CD4-positive, alpha-beta memory T cell (primary cell): ENCODE measurements at regions of chr16 and their contacts with region 1.

Region 1: DNA sequence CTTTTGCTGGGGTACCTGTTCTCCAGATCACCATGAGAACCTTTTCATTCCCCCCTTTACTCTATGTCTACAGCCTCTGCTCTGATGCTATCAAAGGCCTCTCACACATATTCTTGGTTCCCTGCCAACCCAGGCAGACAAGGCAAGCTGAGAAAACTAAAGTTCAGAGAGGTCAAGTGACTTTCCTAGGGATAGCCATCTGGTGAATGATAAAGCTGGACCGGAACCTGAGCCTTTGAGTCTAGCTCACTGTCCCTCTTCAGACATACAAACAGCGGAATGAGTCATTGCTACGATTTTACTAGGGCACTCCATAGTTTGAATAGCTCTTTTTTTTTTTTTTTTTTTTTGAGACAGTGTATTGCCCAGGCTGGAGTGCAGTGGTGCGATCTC is 73.3 kb downstream of the XYLT1 start:
- DNase-seq: peak; percentile 37 to 68 (median 45)
- H3K4me3 ChIP-seq: no peak overlapping the region
- H3K4me3 Mint-ChIP-seq: peak overlapping the region; percentile 16 to 89 (median 76)
- H3K27ac ChIP-seq: peak overlapping the region; percentile 77
- H3K27ac Mint-ChIP-seq: peak overlapping the region; percentile 97 to 100 (median 99)
- H3K4me1 ChIP-seq: peaks cover 77% of the 10 kb centered on the region
- H3K4me1 Mint-ChIP-seq: peaks cover 45 to 85% (median 68%) of the 10 kb centered on the region in 4 donors
- H3K27me3 ChIP-seq: no peaks in the 10 kb centered on the region
- H3K27me3 Mint-ChIP-seq: no peaks in the 10 kb centered on the region

Region 2: DNA sequence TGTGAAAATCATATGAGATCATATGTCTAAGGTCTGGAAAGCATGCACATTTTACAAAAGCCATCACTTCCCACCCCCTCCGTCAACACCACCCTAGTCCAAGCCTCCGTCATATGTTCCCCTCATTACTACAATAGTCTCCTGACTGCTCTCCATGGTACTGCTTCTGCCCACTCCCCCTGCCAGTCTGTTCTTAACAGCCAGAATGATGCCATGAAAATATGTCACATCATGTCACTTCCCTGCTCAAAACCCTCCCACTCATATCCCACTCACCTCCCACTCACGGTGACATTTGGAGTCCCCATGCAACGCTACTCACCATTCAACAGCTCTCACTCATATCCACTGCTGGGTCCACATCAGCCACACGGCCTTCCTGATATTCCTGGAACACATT is 359.1 kb before region 1 on chr16:
- CTCF ChIA-PET with region 1: no interaction called
- POLR2A ChIA-PET with region 1: no interaction called
- intact Hi-C with region 1: no loop called
- DNase-seq: no peak
- H3K4me3 ChIP-seq: no peak overlapping the region
- H3K4me3 Mint-ChIP-seq: no peak overlapping the region
- H3K27ac ChIP-seq: no peak overlapping the region
- H3K27ac Mint-ChIP-seq: no peak overlapping the region
- H3K4me1 ChIP-seq: no peaks in the 10 kb centered on the region
- H3K4me1 Mint-ChIP-seq: no peaks in the 10 kb centered on the region
- H3K27me3 ChIP-seq: no peaks in the 10 kb centered on the region
- H3K27me3 Mint-ChIP-seq: no peaks in the 10 kb centered on the region

Region 3: GRCh38 chr16:17334096-17334495 is 63.4 kb before region 1 on chr16:
- CTCF ChIA-PET with region 1: no interaction called
- POLR2A ChIA-PET with region 1: no interaction called
- intact Hi-C with region 1: no loop called
- DNase-seq: no peak
- H3K4me3 ChIP-seq: no peak overlapping the region
- H3K4me3 Mint-ChIP-seq: no peak overlapping the region
- H3K27ac ChIP-seq: no peak overlapping the region
- H3K27ac Mint-ChIP-seq: peak overlapping the region in 4 of 7 donors; percentile 57 to 82 (median 62)
- H3K4me1 ChIP-seq: no peaks in the 10 kb centered on the region
- H3K4me1 Mint-ChIP-seq: peaks cover 8 to 19% (median 11%) of the 10 kb centered on the region in 4 donors
- H3K27me3 ChIP-seq: no peaks in the 10 kb centered on the region
- H3K27me3 Mint-ChIP-seq: no peaks in the 10 kb centered on the region

Region 4: DNA sequence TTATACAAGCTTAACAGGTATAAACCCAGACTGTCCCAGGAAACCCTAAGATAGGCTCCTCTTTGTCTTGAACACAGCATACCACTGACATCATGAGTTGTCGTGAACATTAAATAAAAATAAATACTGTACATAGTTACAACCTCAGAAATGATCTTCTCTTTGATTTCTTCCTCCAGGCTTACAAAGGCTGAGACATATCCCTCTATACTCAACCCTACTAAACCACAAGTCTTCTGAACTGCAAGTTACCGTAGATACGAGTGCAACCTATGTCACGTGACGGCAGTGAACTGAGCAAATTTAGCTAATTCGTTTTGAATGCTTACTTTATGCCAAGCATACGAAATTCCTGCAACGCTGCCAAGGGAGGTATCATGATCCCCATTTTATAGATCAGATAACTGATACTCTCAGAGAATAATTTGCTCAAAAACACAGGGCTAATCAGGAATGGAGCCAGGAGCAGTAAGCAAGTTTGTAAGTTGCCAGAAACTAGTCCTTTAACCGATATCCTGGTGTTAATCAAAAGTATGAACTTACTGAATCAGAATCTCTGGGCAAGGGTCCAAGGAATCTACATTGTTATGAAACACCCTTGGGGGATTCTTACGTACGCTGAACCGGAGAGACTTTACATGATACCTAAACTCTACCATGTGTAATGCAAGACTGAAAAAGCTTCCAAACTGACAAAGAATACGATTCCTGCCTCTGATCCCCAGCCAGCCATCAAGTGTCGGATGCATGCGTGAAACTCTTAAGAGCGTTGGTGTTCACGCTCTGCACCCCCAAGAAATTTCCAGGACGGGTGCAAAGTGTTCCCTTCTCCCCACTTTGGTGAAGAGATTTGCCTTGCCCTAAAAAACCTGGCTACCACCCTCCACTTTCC is 32.9 kb before region 1 on chr16:
- CTCF ChIA-PET with region 1: interaction called, 10 read pairs
- POLR2A ChIA-PET with region 1: interaction called, 201 read pairs
- intact Hi-C with region 1: loop called (anchors 1 kb)
- DNase-seq: peak; percentile 85 to 91 (median 87)
- H3K4me3 ChIP-seq: peak overlapping the region; percentile 10 to 18
- H3K4me3 Mint-ChIP-seq: peak overlapping the region; percentile 52 to 77 (median 68)
- H3K27ac ChIP-seq: peak overlapping the region; percentile 72
- H3K27ac Mint-ChIP-seq: peak overlapping the region; percentile 95 to 100 (median 99)
- H3K4me1 ChIP-seq: peaks cover 100% of the 10 kb centered on the region
- H3K4me1 Mint-ChIP-seq: peaks cover 84 to 100% (median 94%) of the 10 kb centered on the region in 4 donors
- H3K27me3 ChIP-seq: no peaks in the 10 kb centered on the region
- H3K27me3 Mint-ChIP-seq: no peaks in the 10 kb centered on the region

Region 5: DNA sequence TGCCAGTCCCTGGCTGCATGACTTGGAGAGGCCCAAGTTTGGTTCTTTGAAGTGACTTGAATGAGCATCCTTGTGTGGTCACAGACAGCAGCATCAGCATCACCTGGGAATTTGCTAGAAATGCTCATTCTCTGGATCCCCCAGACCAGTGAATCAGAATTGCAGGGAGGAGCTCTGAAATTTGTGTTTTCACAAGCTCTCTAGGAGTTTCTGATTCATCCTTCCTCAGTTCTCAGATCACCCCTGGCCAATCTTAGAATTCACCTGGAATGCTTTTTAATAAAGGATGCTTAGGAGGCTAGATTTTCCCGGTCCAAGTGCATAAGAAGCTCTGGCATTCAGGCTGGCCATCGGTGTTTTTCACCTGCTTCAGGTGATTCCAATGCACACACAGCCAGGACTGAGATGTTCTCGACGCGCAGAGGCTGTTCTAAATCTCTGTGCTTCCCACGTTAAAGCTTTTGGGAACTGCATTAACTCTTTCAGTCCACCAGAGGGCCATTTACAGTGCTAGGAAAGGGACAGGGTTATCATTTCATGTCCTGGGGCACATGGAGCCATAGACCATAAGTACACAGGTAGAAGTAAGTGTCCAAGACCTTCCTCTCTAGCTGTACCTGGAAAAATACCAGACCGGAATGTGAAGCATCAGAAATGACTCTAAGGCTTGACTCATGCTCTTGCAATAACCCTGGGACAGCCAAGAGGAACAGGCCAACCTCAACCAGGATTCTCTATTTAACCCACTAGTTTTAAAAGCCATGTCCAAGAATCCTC is 159.0 kb after region 1 on chr16:
- CTCF ChIA-PET with region 1: no interaction called
- POLR2A ChIA-PET with region 1: no interaction called
- intact Hi-C with region 1: no loop called
- DNase-seq: no peak
- H3K4me3 ChIP-seq: no peak overlapping the region
- H3K4me3 Mint-ChIP-seq: no peak overlapping the region
- H3K27ac ChIP-seq: no peak overlapping the region
- H3K27ac Mint-ChIP-seq: no peak overlapping the region
- H3K4me1 ChIP-seq: no peaks in the 10 kb centered on the region
- H3K4me1 Mint-ChIP-seq: peaks cover 0 to 4% (median 1%) of the 10 kb centered on the region in 4 donors
- H3K27me3 ChIP-seq: no peaks in the 10 kb centered on the region
- H3K27me3 Mint-ChIP-seq: peaks cover 9 to 23% of the 10 kb centered on the region in 2 donors